Caco-2 (cell line): ENCODE measurements at regions of chr2 and their contacts with region 1.

Region 1: GRCh38 chr2:149733936-149734685 is 146.5 kb upstream of the MMADHC start:
- DNase-seq: peak; percentile 75 to 78
- H3K4me3 ChIP-seq: no peak overlapping the region
- H3K4me3 Mint-ChIP-seq: no peak overlapping the region
- H3K27ac Mint-ChIP-seq: peak overlapping the region; percentile 25
- H3K4me1 ChIP-seq: peaks cover 36% of the 10 kb centered on the region
- H3K4me1 Mint-ChIP-seq: peaks cover 13% of the 10 kb centered on the region
- H3K27me3 ChIP-seq: no peaks in the 10 kb centered on the region
- H3K27me3 Mint-ChIP-seq: no peaks in the 10 kb centered on the region
- CTCF ChIP-seq: no peak

Region 2: GRCh38 chr2:149989447-149990063 is 255.4 kb after region 1 on chr2:
- CTCF ChIA-PET with region 1: no interaction called
- POLR2A ChIA-PET with region 1: no interaction called
- intact Hi-C with region 1: loop called (anchors 5 kb)
- DNase-seq: peak in 1 of 2 experiments; percentile 50
- H3K4me3 ChIP-seq: no peak overlapping the region
- H3K4me3 Mint-ChIP-seq: peak overlapping the region; percentile 42
- H3K27ac Mint-ChIP-seq: peak overlapping the region; percentile 87
- H3K4me1 ChIP-seq: peaks cover 47% of the 10 kb centered on the region
- H3K4me1 Mint-ChIP-seq: peaks cover 51% of the 10 kb centered on the region
- H3K27me3 ChIP-seq: no peaks in the 10 kb centered on the region
- H3K27me3 Mint-ChIP-seq: no peaks in the 10 kb centered on the region
- CTCF ChIP-seq: no peak

Region 3: GRCh38 chr2:150472511-150472899 is 738.4 kb after region 1 on chr2:
- CTCF ChIA-PET with region 1: no interaction called
- POLR2A ChIA-PET with region 1: no interaction called
- intact Hi-C with region 1: loop called (anchors 2 kb)
- DNase-seq: peak; percentile 34 to 69
- H3K4me3 ChIP-seq: no peak overlapping the region
- H3K4me3 Mint-ChIP-seq: no peak overlapping the region
- H3K27ac Mint-ChIP-seq: peak overlapping the region; percentile 45
- H3K4me1 ChIP-seq: peaks cover 82% of the 10 kb centered on the region
- H3K4me1 Mint-ChIP-seq: peaks cover 67% of the 10 kb centered on the region
- H3K27me3 ChIP-seq: no peaks in the 10 kb centered on the region
- H3K27me3 Mint-ChIP-seq: no peaks in the 10 kb centered on the region
- CTCF ChIP-seq: no peak